Caco-2 (cell line): ENCODE measurements at regions of chr14 and their contacts with region 1.

Region 1: GRCh38 chr14:94593749-94594431 is 12.7 kb downstream of the SERPINA5 start:
- DNase-seq: peak; percentile 54 to 67
- H3K4me3 ChIP-seq: no peak overlapping the region
- H3K4me3 Mint-ChIP-seq: no peak overlapping the region
- H3K27ac Mint-ChIP-seq: peak overlapping the region; percentile 36
- H3K4me1 ChIP-seq: peaks cover 24% of the 10 kb centered on the region
- H3K4me1 Mint-ChIP-seq: peaks cover 22% of the 10 kb centered on the region
- H3K27me3 ChIP-seq: no peaks in the 10 kb centered on the region
- H3K27me3 Mint-ChIP-seq: no peaks in the 10 kb centered on the region
- CTCF ChIP-seq: no peak

Region 2: DNA sequence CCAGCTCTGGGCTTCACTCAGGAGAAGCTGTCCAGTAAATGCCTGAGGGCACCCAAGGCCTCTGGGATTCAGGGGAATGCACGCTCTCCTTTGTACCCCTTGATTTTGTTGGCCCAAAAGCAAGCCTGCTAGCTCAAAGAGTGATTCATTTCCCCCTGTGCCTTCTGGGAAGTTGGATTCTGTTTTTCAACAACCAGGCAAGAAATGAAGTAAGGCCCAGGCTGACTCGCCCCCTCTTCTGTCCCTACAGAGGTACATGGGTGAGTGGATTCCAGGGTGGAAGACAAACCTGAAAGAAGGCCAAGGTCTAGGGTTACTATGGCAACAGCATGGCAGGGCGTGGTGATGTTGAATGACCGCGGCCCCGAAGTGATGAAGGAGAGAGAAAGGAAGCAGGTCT is 21.9 kb before region 1 on chr14:
- CTCF ChIA-PET with region 1: no interaction called
- POLR2A ChIA-PET with region 1: no interaction called
- intact Hi-C with region 1: loop called (anchors 2 kb)
- DNase-seq: no peak
- H3K4me3 ChIP-seq: no peak overlapping the region
- H3K4me3 Mint-ChIP-seq: peak overlapping the region; percentile 9
- H3K27ac Mint-ChIP-seq: peak overlapping the region; percentile 77
- H3K4me1 ChIP-seq: peaks cover 26% of the 10 kb centered on the region
- H3K4me1 Mint-ChIP-seq: peaks cover 7% of the 10 kb centered on the region
- H3K27me3 ChIP-seq: no peaks in the 10 kb centered on the region
- H3K27me3 Mint-ChIP-seq: no peaks in the 10 kb centered on the region
- CTCF ChIP-seq: no peak